Esophagus muscularis mucosa (tissue), 4 donors: ENCODE measurements at regions of chr6 and their contacts with region 1.

Region 1: GRCh38 chr6:143677891-143678791 is at the start of gene PHACTR2:
- DNase-seq: peak; percentile 94
- H3K4me3 ChIP-seq: peak within 1 kb of the TSS; percentile 83 to 91 (median 90)
- H3K27ac ChIP-seq: peak within 1 kb of the TSS; percentile 93 to 97 (median 95)
- H3K4me1 ChIP-seq: peaks cover 20 to 45% (median 36%) of the 10 kb centered on the region in 4 donors
- H3K27me3 ChIP-seq: no peaks in the 10 kb centered on the region
- CTCF ChIP-seq: no peak
- EP300 ChIP-seq: no peak
- POLR2A ChIP-seq: no peak
- total RNA-seq, gene PHACTR2: 71.0 to 127 (median 82.7) TPM

Region 2: DNA sequence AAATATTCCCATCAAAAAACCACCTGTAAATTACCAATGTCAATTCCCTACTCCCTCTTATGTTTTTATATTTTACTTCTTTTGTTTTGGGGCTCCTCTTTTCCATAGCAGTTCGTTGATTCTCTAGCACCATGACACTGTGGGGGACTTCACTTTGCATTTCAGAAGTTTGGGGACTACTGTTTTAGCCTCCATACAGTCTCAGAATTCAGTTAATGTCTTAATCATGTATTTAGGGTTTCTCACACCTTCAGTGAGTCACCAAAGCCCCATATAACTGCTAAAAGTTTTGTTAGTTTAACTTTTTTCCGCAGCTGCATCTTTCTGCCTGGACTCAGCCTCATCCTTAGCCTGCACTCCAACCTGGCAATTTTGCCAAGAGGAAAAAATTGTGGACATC is 638.1 kb before region 1 on chr6:
- intact Hi-C with region 1: no loop called
- DNase-seq: no peak
- H3K4me3 ChIP-seq: no peak overlapping the region
- H3K27ac ChIP-seq: no peak overlapping the region
- H3K4me1 ChIP-seq: no peaks in the 10 kb centered on the region
- H3K27me3 ChIP-seq: no peaks in the 10 kb centered on the region
- CTCF ChIP-seq: no peak
- EP300 ChIP-seq: no peak
- POLR2A ChIP-seq: no peak

Region 3: GRCh38 chr6:143598466-143599080 is 79.6 kb before region 1 on chr6:
- intact Hi-C with region 1: loop called (anchors 5 kb)
- DNase-seq: no peak
- H3K4me3 ChIP-seq: no peak overlapping the region
- H3K27ac ChIP-seq: peak overlapping the region in 1 of 4 donors; percentile 5
- H3K4me1 ChIP-seq: peaks cover 21 to 38% (median 36%) of the 10 kb centered on the region in 4 donors
- H3K27me3 ChIP-seq: no peaks in the 10 kb centered on the region
- CTCF ChIP-seq: no peak
- EP300 ChIP-seq: no peak
- POLR2A ChIP-seq: no peak

Region 4: DNA sequence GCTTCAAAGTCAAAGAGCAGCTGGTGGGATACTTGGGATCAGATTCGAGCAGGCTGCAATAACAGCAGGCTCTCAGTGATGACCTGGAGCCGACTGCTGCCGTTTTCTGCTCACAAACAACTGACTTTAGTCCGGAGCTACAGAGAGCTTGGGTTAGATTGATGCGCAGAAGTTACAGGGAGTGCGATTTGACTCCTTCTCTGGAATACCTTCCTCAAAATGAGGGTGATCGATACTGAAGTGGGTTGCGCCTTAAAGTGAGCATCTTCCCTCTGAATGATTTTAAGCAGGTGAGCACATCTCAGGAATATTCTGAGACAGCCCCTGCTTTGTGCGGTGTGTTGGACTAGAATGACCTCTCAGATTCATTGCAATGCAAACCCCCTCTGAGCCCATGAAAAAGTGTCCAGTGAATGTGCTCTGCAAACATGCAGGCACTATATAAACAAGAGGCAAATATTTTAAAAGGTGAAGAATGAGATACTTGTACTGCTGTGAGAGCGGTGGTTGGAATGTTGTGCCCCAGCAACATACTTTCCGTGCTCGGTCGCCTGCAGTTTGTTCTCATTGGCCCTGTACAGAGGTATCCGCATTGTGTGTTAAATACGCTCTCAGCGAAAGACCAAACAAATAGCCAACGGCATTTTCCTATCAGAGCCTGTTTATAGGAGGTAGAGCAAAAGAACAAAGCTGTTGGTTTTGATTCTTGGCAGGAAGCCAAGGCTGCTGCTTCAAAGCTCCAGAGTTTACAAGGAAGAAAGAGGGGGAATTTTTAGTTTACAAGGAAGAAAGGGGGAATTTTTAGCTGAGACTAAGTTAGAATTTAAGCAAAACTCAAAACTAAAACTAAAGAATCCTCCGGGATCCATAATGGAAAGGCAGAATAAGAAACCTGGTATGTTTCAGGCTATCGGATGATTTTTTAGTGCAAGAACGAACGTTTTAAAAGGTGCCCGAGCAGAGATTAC is 67.3 kb after region 1 on chr6:
- intact Hi-C with region 1: loop called (anchors 5 kb)
- DNase-seq: no peak
- H3K4me3 ChIP-seq: peak overlapping the region; percentile 33 to 40 (median 34)
- H3K27ac ChIP-seq: peak overlapping the region; percentile 52 to 75 (median 64)
- H3K4me1 ChIP-seq: peaks cover 45 to 56% (median 49%) of the 10 kb centered on the region in 4 donors
- H3K27me3 ChIP-seq: no peaks in the 10 kb centered on the region
- CTCF ChIP-seq: no peak
- EP300 ChIP-seq: no peak
- POLR2A ChIP-seq: no peak

Region 5: DNA sequence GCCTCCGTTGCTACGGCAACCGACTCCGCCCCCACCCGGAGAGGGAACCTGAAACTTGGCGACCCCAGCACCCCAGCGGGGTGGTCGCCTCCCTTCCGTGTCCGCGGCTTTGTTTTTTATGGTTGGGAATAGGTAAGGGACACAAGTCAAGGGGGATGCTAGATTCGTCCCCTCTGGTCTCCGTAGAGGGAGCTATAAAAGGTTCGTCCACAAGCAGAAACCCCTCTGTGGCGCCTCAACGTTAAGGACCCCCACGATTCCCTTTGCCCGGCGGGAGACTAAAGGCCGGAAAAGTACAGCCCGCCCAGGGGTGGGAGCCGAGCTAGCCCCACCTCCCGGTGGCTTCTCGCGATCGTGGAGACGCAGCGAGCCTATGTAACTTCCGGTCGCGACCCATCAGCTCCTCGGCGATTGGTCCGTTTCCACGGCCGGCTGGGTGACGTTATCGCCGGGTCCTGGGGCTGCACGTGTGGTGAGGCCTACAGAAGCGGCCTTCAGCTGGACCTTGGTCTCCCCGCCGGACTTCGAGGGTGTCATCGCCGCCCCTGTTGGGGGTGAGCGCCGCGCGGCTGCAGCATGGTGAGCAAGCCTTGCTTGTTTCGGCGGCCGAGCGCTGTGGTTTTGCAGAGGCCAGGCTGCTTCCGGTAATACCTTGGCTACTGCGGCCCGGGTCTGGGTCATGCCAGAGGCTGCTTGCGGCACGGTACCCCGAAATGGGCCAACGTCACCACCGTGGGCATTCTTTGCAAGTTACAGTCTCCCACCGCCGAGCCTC is 164.9 kb after region 1 on chr6 and contains the start of gene LTV1:
- intact Hi-C with region 1: loop called (anchors 5 kb)
- DNase-seq: peak; percentile 99
- H3K4me3 ChIP-seq: peak within 1 kb of the TSS; percentile 73 to 86 (median 78)
- H3K27ac ChIP-seq: peak within 1 kb of the TSS; percentile 92 to 96 (median 95)
- H3K4me1 ChIP-seq: peaks cover 11 to 31% (median 22%) of the 10 kb centered on the region in 4 donors
- H3K27me3 ChIP-seq: no peaks in the 10 kb centered on the region
- CTCF ChIP-seq: peak in 1 of 3 experiments; percentile 17
- EP300 ChIP-seq: no peak
- POLR2A ChIP-seq: peak; percentile 18
- total RNA-seq, gene LTV1: 15.0 to 20.0 (median 18.0) TPM

Region 6: DNA sequence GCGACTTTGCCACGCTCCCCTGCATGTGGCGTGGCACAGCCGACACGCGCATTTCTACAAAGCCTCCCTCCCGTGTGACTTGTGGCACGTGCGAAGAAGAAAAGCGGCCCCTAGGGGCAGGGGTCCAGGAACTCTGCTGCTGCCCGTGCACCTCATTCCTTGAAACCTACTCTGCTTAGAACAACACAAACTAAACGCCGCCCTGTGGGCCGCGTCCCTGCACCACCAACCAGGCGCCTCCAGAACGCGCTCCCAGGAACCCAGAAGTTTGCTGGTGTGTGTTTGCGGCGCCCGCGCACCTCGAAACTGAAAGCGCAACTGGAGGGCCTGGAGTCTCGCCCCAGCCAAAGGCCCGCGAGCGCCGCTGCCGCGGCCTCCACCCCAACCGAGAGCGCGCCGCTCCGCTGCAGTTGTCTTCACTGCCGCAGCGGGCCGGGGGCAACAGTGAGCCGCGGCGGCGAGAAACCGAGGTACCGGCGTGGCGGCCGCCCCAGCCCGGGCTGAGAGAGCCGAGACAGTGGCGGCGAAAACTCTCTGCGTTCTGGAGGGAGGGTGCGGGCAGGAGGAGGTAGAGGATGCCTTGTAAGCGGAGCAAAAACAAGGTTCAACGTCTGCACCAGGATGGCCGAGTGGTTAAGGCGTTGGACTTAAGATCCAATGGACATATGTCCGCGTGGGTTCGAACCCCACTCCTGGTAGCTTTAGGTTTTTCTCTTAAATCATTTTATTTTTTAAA is 538.0 kb after region 1 on chr6:
- intact Hi-C with region 1: no loop called
- DNase-seq: peak; percentile 100
- H3K4me3 ChIP-seq: peak overlapping the region; percentile 68 to 77 (median 74)
- H3K27ac ChIP-seq: peak overlapping the region; percentile 89 to 96 (median 95)
- H3K4me1 ChIP-seq: peaks cover 18 to 26% (median 23%) of the 10 kb centered on the region in 4 donors
- H3K27me3 ChIP-seq: no peaks in the 10 kb centered on the region
- CTCF ChIP-seq: peak; percentile 30 to 66 (median 53)
- EP300 ChIP-seq: no peak
- POLR2A ChIP-seq: no peak